CD4-positive, alpha-beta memory T cell (primary cell): ENCODE measurements at regions of chr14 and their contacts with region 1.

Region 1: GRCh38 chr14:54566410-54567223 is at the start of gene SAMD4A:
- DNase-seq: peak; percentile 58 to 82 (median 66)
- H3K4me3 ChIP-seq: peak within 1 kb of the TSS; percentile 57 to 69
- H3K4me3 Mint-ChIP-seq: peak within 1 kb of the TSS; percentile 92 to 99 (median 96)
- H3K27ac ChIP-seq: peak within 1 kb of the TSS; percentile 79
- H3K27ac Mint-ChIP-seq: peak within 1 kb of the TSS; percentile 88 to 97 (median 95)
- H3K4me1 ChIP-seq: peaks cover 16% of the 10 kb centered on the region
- H3K4me1 Mint-ChIP-seq: peaks cover 8 to 31% (median 11%) of the 10 kb centered on the region in 4 donors
- H3K27me3 ChIP-seq: no peaks in the 10 kb centered on the region
- H3K27me3 Mint-ChIP-seq: peaks cover 2 to 3% of the 10 kb centered on the region in 2 donors
- total RNA-seq, gene SAMD4A: 0.93 to 1.4 TPM

Region 2: DNA sequence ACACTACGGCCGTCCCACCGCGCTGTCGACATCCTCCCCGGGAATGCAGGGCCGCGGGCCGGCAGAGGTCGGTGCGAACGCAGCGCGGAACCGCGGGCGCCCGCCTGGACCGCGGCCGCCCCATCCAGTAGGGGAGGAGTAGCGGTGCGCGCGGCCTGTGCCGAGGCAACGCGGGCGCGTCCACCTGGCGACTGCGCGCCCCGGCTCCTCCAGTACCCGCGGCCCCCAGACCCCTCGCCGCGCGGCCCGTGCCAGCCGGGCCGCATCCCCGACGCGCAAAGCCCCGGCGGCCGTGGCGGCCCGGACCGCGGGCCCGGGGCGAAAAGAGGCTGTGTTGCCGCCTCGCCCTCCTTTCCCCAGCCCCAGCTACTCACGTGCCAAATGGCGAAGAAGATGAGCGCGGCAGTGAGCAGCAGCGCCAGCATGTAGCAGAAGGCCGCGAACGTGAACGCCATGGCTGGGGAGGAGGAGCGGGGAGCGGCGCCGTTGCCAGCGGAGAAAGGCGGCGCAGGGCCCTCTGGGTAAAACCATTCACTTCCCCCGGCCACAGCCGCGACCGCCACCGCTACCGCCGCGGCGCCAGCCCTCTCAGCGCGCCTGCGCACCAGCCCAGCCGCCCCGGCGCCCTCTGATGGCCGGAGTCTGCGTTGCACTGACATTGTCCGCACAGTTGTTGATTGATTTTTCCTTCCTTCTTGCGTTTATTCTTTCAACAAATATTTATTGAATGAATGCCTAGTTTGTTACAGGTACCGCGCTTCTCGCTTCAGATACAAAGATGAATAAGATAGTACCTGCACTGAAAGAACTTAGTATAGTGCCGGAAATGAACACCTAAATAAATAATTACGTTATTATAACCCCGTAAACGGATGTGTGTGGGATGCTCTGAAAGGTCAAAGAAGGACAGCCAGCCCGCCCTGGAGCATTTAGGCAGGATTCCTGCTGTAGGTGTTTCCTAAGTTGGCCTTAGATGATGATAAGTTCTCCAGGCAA is 125.4 kb before region 1 on chr14 and contains the start of gene CNIH1:
- CTCF ChIA-PET with region 1: no interaction called
- POLR2A ChIA-PET with region 1: no interaction called
- intact Hi-C with region 1: loop called (anchors 1 kb)
- DNase-seq: peak; percentile 88 to 96 (median 93)
- H3K4me3 ChIP-seq: peak within 1 kb of the TSS; percentile 45 to 61
- H3K4me3 Mint-ChIP-seq: peak within 1 kb of the TSS; percentile 83 to 95 (median 92)
- H3K27ac ChIP-seq: peak within 1 kb of the TSS; percentile 55
- H3K27ac Mint-ChIP-seq: peak within 1 kb of the TSS; percentile 88 to 98 (median 94)
- H3K4me1 ChIP-seq: peaks cover 49% of the 10 kb centered on the region
- H3K4me1 Mint-ChIP-seq: peaks cover 29 to 55% (median 36%) of the 10 kb centered on the region in 4 donors
- H3K27me3 ChIP-seq: no peaks in the 10 kb centered on the region
- H3K27me3 Mint-ChIP-seq: peaks cover 1 to 2% of the 10 kb centered on the region in 2 donors
- total RNA-seq, gene CNIH1: 46.9 to 54.2 TPM

Region 3: DNA sequence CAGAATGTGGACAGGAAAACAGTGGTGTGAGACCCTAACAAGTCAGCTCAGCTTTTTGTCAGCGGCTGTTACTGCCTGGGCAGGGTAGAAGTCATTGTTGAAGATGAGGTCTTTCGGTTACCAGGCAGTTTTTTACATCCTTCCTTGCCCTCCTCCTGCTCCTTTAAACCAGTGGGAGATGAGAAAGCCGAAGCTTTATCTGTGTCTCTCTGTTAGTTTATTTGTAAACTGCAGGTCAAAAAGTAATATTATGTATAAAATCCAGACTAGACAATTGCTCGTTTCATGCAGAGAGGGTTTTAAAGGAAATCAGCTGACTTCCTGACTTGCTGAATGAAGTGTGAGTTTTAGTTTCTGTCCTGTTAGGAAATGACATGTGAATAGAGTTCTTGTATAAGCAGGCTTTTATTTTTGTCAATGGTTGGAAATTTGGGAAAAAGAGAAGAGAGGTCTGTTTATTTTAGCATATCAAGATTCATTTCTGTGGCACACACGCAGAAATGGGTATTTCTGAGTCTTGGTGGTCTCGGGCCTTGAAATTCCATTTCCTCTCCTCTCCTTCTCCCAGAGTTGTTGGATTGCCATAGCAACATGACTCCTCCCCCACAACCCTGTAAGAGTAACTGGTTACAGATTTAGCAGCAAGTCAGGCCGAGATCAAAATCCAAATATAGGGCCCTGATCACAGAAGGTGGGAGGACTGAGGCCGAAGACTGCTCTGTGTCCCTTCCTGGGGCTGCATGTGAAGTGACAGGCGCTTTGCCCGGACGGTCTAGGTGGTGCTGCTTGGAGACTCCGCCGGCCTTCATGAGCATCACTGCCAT is 61.1 kb after region 1 on chr14:
- CTCF ChIA-PET with region 1: interaction called, 7 read pairs
- POLR2A ChIA-PET with region 1: interaction called, 22 read pairs
- intact Hi-C with region 1: loop called (anchors 1 kb)
- DNase-seq: peak; percentile 44 to 70 (median 61)
- H3K4me3 ChIP-seq: peak overlapping the region; percentile 5 to 47
- H3K4me3 Mint-ChIP-seq: peak overlapping the region; percentile 65 to 86 (median 83)
- H3K27ac ChIP-seq: peak overlapping the region; percentile 67
- H3K27ac Mint-ChIP-seq: peak overlapping the region; percentile 87 to 96 (median 93)
- H3K4me1 ChIP-seq: peaks cover 48% of the 10 kb centered on the region
- H3K4me1 Mint-ChIP-seq: peaks cover 32 to 60% (median 47%) of the 10 kb centered on the region in 4 donors
- H3K27me3 ChIP-seq: no peaks in the 10 kb centered on the region
- H3K27me3 Mint-ChIP-seq: no peaks in the 10 kb centered on the region

Region 4: GRCh38 chr14:54722781-54723432 is 156.3 kb after region 1 on chr14:
- CTCF ChIA-PET with region 1: interaction called, 5 read pairs
- POLR2A ChIA-PET with region 1: no interaction called
- intact Hi-C with region 1: loop called (anchors 1 kb)
- DNase-seq: peak in 1 of 5 donors; percentile 21
- H3K4me3 ChIP-seq: no peak overlapping the region
- H3K4me3 Mint-ChIP-seq: no peak overlapping the region
- H3K27ac ChIP-seq: no peak overlapping the region
- H3K27ac Mint-ChIP-seq: no peak overlapping the region
- H3K4me1 ChIP-seq: no peaks in the 10 kb centered on the region
- H3K4me1 Mint-ChIP-seq: no peaks in the 10 kb centered on the region
- H3K27me3 ChIP-seq: no peaks in the 10 kb centered on the region
- H3K27me3 Mint-ChIP-seq: peaks cover 3 to 5% of the 10 kb centered on the region in 2 donors

Region 5: DNA sequence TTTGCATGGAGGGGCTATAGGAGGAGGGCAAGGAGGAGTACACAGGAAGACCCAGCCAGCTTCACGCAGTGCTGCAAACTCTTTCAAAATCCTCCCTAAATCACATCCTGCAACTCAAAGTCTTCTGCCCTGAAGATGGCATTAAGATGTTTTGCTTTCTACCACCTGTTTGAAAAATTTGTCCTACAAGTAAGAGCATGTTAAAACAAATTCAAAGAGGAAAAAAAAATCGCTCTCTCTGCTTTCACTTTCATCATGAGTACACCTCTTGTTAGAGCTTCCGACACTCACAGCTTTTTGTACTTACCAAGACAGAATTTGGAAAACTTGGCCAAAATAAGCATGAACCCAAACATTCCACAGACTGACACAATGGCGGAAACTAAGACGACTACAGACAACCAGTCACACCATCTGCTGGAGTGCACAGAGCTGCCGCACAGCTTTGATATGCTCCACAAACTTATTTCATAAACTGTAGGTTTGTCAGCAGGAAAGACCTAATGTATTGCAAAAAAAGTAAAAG is 314.7 kb after region 1 on chr14:
- CTCF ChIA-PET with region 1: interaction called, 5 read pairs
- POLR2A ChIA-PET with region 1: interaction called, 9 read pairs
- intact Hi-C with region 1: loop called (anchors 5 kb)
- DNase-seq: peak; percentile 46 to 65 (median 54)
- H3K4me3 ChIP-seq: peak overlapping the region; percentile 32 to 77
- H3K4me3 Mint-ChIP-seq: peak overlapping the region; percentile 82 to 95 (median 92)
- H3K27ac ChIP-seq: peak overlapping the region; percentile 59
- H3K27ac Mint-ChIP-seq: peak overlapping the region; percentile 80 to 98 (median 96)
- H3K4me1 ChIP-seq: peaks cover 45% of the 10 kb centered on the region
- H3K4me1 Mint-ChIP-seq: peaks cover 41 to 68% (median 47%) of the 10 kb centered on the region in 4 donors
- H3K27me3 ChIP-seq: no peaks in the 10 kb centered on the region
- H3K27me3 Mint-ChIP-seq: no peaks in the 10 kb centered on the region

Region 6: DNA sequence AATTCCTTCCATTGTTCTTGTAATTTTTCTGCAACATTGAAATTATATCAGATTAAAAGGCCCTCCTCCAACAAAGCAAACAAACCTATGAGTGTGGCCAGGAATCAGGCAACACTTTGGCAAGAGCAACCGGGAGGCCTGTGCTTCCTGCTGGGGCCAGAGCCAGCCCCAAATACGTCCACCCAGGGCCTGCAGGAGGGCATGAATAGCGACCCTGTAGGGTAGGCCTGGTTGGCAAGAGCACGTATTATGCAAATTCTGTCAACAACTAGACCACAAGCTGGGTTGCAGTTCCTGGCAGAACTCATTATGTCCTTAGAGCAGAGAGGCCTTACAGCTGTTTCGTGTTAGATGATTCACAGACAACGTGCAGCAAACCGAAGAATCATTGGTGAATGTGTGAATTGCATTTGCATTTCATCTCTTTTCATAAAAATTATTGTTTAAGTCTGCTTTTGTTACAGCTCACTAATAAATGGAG is 535.6 kb after region 1 on chr14:
- CTCF ChIA-PET with region 1: no interaction called
- POLR2A ChIA-PET with region 1: interaction called, 3 read pairs
- intact Hi-C with region 1: loop called (anchors 5 kb)
- DNase-seq: peak; percentile 53 to 77 (median 55)
- H3K4me3 ChIP-seq: peak overlapping the region in 1 of 2 donors; percentile 26
- H3K4me3 Mint-ChIP-seq: peak overlapping the region in 7 of 8 donors; percentile 18 to 85 (median 67)
- H3K27ac ChIP-seq: peak overlapping the region; percentile 65
- H3K27ac Mint-ChIP-seq: peak overlapping the region; percentile 94 to 98 (median 97)
- H3K4me1 ChIP-seq: peaks cover 72% of the 10 kb centered on the region
- H3K4me1 Mint-ChIP-seq: peaks cover 41 to 72% (median 53%) of the 10 kb centered on the region in 4 donors
- H3K27me3 ChIP-seq: no peaks in the 10 kb centered on the region
- H3K27me3 Mint-ChIP-seq: no peaks in the 10 kb centered on the region

Region 7: GRCh38 chr14:55245657-55246268 is 679.1 kb after region 1 on chr14:
- CTCF ChIA-PET with region 1: no interaction called
- POLR2A ChIA-PET with region 1: no interaction called
- intact Hi-C with region 1: no loop called
- DNase-seq: peak; percentile 43 to 61 (median 48)
- H3K4me3 ChIP-seq: no peak overlapping the region
- H3K4me3 Mint-ChIP-seq: no peak overlapping the region
- H3K27ac ChIP-seq: no peak overlapping the region
- H3K27ac Mint-ChIP-seq: peak overlapping the region in 1 of 7 donors; percentile 50
- H3K4me1 ChIP-seq: no peaks in the 10 kb centered on the region
- H3K4me1 Mint-ChIP-seq: peaks cover 0 to 1% (median 0%) of the 10 kb centered on the region in 4 donors
- H3K27me3 ChIP-seq: no peaks in the 10 kb centered on the region
- H3K27me3 Mint-ChIP-seq: peaks cover 8% of the 10 kb centered on the region in 2 donors